ENCODE measurements at regions of chr5 and their contacts with region 1.

Region 1: DNA sequence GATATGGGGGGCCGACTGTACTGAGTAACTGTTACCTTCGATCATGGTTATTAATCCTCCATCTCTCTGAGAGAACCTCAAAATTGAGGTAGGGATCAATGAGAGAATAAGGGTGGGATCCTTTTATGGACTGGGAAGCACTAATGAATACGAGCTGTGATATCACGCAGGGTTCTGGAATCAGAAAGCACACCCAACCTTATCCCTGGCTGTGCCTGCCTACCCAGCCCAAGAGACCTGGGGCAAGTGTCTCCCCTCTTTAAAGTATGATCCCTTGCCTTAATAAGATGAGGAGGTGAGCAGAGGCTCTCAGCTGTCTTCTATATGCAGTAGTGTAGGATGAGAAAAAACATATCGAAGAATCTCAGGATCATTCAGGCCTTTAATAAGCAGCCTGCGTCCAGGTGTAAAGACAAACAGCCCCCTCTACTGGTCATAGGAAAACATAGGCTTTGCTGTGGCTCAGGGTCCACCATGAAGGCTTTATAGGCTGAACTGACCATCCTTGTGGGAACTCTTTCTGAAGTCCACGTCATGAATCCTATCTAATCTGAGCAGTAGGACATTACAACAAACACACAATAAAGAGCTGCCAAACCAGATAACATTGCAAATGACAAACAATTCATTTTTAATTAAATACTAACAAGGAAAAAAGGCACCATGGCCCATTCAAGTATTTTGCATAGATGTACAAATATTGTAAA is 16.8 kb downstream of the NIPAL4 start:
- DNase-seq: peak; percentile 69
- CTCF ChIP-seq: peak; percentile 56

Region 2: GRCh38 chr5:156561651-156562050 is 915.2 kb before region 1 on chr5:
- in situ Hi-C with region 1: no loop called
- DNase-seq: no peak
- CTCF ChIP-seq: no peak

Region 3: DNA sequence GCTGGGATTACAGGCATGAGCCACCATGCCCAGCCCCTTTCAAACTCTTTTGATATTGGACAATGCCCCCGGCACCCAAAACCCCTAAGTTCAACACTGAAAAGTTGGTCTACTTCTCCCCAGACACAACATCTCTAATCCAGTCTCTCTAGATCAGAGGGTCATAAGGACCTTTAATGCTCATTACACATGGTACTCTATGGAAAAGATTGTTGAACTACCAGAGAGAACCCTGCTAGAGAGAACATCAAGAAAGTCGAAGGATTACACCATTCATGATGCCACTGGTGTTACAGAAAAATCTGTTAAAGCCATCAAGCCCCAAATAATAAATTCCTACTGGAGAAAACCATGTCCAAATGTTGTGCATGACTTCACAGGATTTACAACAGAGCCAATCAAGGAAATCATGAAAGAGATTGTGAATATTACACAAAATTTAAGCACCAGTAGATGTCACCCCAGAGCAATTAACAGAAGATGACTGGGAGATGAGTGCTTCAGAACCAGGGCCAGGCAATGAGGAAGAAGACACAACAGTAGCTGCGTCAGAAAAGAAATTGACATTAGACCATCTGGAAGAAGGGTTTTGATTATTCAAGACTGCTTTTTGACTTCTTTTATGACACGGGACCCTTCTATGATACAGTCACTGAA is 45.2 kb before region 1 on chr5:
- in situ Hi-C with region 1: loop called (anchors 10 kb)
- DNase-seq: peak; percentile 58
- CTCF ChIP-seq: peak; percentile 37

Region 4: DNA sequence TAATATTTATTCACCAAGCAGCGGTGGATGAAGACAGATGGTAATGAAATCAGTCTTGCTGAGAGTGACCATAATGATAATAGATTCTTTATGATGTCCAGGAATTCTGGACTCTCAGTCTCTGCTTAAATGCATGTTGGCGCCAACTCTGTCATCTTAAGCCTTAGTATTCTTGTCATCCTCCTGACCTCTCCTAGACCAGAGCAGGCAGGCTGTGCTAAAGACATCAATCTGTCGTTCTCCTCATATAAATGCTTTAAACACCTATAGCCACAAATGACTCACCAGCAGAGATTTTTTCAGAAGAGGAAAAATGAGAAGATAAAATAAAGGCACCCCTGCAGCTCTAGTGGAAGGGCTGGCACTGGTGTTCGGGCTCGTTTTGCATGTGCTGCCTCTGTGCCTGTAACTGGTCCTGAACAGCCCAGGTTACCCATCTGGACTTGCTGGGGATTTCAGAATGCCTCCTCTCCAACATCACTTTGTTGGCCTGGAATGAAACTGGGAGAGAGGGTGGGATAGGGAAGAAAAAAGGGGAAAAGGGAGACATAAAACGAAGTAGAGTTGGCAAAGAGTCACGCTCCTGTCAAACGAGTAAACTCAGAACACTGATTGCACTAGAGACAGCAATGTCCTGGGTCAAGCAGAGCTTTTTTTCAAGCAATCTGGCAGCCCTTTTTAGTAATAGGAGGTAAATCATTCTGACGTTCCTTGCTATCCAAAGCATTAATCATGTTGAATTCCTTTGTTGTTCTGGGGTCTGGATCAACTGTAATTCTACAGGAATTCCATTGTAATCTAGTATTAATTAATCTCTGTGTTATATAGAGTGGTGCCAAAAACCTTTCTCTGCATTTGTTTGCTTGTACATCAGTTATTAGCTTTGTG is 577.6 kb after region 1 on chr5:
- in situ Hi-C with region 1: no loop called
- DNase-seq: no peak
- CTCF ChIP-seq: no peak

Measured in GM13976 (cell line).